ENCODE measurements at regions of chr10 and their contacts with region 1.

Region 1: GRCh38 chr10:73965890-73966768 is 31.8 kb upstream of the VCL start:
- DNase-seq: peak; percentile 93
- ATAC-seq: peak; percentile 94
- H3K4me3 ChIP-seq: no peak overlapping the region
- H3K27ac ChIP-seq: peak overlapping the region; percentile 84 to 97
- H3K4me1 ChIP-seq: peaks cover 0 to 1% of the 10 kb centered on the region in 2 donors
- H3K27me3 ChIP-seq: no peaks in the 10 kb centered on the region

Region 2: DNA sequence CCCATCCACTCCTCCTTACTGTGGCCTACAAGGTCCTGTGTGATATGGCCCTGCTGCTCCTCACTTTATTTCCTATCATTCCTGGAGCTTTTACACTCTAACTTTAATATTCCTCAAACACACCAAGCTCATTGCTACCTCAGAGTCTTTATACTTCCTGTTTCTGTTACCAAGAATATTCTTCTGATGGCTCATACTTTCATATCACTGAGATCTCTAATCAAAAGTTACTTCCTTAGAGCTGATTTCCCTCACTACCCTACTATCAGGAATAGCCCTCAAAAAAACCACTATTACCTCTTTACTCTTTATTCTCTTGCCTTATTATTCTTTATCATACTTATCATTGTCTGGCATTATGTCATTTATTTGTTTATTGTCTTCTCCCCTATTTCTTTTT is 464.5 kb before region 1 on chr10:
- intact Hi-C with region 1: no loop called
- DNase-seq: no peak
- ATAC-seq: no peak
- H3K4me3 ChIP-seq: no peak overlapping the region
- H3K27ac ChIP-seq: no peak overlapping the region
- H3K4me1 ChIP-seq: peaks cover 0 to under 1% of the 10 kb centered on the region in 2 donors
- H3K27me3 ChIP-seq: no peaks in the 10 kb centered on the region

Region 3: GRCh38 chr10:73997787-73998622 is 31.9 kb after region 1 on chr10 and contains the start of gene VCL:
- intact Hi-C with region 1: no loop called
- DNase-seq: peak; percentile 98 to 99
- ATAC-seq: peak; percentile 98
- H3K4me3 ChIP-seq: peak within 1 kb of the TSS; percentile 86 to 95
- H3K27ac ChIP-seq: peak within 1 kb of the TSS; percentile 85 to 86
- H3K4me1 ChIP-seq: no peaks in the 10 kb centered on the region
- H3K27me3 ChIP-seq: no peaks in the 10 kb centered on the region
- total RNA-seq, gene VCL: 312 to 499 TPM

Region 4: GRCh38 chr10:74008212-74008731 is 42.1 kb after region 1 on chr10:
- intact Hi-C with region 1: loop called in 1 of 2 experiments (anchors 5 kb)
- DNase-seq: no peak
- ATAC-seq: no peak
- H3K4me3 ChIP-seq: peak overlapping the region in 1 of 2 donors; percentile 34
- H3K27ac ChIP-seq: peak overlapping the region in 1 of 2 donors; percentile 57
- H3K4me1 ChIP-seq: peaks cover 6 to 8% of the 10 kb centered on the region in 2 donors
- H3K27me3 ChIP-seq: no peaks in the 10 kb centered on the region